ENCODE measurements at regions of chr5 and their contacts with region 1.

Region 1: DNA sequence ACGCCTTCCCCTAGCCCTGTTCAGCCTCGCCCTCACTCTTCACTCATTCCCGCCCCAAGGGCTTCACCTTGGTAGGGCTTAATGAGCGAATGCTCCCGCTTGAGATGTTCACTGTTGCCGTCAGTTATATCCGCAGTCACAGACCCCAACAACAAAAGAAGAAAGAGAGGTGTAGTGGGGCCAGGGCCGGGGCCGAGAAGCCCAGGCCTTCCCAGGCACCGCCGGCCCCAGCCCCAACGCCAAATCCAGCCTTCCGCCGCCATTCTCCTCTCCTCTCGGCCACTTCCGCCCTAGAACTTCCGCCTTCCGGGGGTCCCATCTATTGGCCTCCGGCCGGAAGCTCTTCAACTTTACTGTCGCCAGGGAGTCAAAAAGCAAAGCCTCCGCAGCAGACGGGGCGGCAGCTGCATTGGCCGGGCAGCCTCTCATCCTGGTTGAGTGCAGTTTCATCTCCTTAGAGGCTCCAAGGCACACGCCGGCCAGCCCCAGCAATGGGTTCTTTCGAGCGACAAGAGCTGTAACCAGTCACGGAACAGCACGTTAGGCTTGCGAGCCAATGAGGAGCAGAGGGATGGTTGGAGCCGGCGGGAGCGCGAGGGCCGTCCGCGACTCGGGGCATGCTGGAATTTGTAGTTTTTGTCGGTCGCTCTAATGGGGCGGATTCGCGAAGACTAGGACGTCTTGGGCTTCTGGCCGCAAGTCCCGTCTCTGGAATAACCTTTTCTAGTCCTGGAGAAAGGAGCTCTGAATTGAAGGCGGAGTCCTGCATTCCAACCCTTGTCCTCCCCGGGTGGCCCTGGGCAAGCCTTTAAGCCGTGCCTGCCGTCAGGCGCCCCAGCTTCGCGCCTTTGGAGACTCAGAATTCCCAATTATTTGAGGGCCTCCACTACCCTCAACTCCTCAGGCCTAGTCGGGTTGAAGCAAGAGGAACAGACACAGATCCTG is at the start of gene LMAN2:
- DNase-seq: peak; percentile 83
- ATAC-seq: peak; percentile 98
- H3K4me3 Mint-ChIP-seq: peak within 1 kb of the TSS; percentile 98
- H3K27ac Mint-ChIP-seq: peak within 1 kb of the TSS; percentile 100
- H3K4me1 Mint-ChIP-seq: peaks cover 59% of the 10 kb centered on the region
- H3K27me3 Mint-ChIP-seq: no peaks in the 10 kb centered on the region
- CTCF ChIP-seq: no peak
- total RNA-seq, gene LMAN2: 88.0 and 89.7 TPM in 2 replicates

Region 2: GRCh38 chr5:177271113-177271512 is 80.5 kb before region 1 on chr5:
- CTCF ChIA-PET with region 1: no interaction called
- POLR2A ChIA-PET with region 1: no interaction called
- intact Hi-C with region 1: no loop called
- DNase-seq: no peak
- ATAC-seq: no peak
- H3K4me3 Mint-ChIP-seq: no peak overlapping the region
- H3K27ac Mint-ChIP-seq: no peak overlapping the region
- H3K4me1 Mint-ChIP-seq: no peaks in the 10 kb centered on the region
- H3K27me3 Mint-ChIP-seq: no peaks in the 10 kb centered on the region
- CTCF ChIP-seq: no peak

Region 3: DNA sequence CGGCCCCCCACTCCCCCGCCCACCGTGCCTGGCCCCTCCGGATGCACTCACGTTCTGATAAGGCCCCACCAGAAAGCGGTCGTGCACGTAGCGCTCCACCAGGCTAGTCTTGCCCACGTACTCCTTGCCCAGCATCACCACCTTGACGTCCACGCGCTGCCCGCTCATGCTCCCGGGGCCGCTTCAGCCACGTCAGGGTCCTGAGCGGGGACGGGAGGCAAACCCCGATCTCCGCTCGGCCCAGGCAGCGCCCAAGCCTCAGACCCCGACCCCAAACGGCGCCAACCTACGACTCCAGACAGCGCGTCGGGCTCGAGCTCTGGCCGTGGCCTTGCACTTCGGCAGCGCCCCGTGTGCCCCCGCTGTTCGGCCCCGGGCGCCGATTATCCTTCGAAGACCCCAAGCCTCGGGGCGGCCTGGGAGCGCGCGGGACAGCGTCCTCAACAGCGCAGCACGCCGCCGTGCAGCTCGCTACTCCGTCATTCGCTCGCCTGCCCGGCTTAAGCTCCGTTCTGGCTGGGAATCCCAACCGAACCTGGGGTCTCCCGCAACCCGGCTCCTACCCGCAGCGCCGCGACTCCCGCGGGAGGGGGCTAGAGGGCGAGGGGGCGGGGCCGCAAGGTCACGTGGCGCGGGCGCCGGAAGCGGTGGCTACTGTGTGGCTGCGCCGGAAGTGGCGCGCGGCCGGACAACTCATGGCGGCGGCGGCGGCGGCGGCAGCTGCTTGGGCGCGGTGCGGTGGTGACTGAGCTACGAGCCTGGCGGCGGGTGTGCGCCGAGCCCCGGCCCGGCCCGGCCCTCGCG is 48.3 kb before region 1 on chr5 and contains the starts of genes PRELID1 and RAB24:
- CTCF ChIA-PET with region 1: interaction called, 4 read pairs
- POLR2A ChIA-PET with region 1: interaction called, 21 read pairs
- intact Hi-C with region 1: loop called (anchors 2 kb)
- DNase-seq: peak; percentile 93
- ATAC-seq: peak; percentile 41
- H3K4me3 Mint-ChIP-seq: peak within 1 kb of the TSS; percentile 90
- H3K27ac Mint-ChIP-seq: peak within 1 kb of the TSS; percentile 89
- H3K4me1 Mint-ChIP-seq: peaks cover 75% of the 10 kb centered on the region
- H3K27me3 Mint-ChIP-seq: no peaks in the 10 kb centered on the region
- CTCF ChIP-seq: no peak
- total RNA-seq, gene PRELID1: 141 and 160 TPM in 2 replicates
- total RNA-seq, gene RAB24: 35.6 and 36.3 TPM in 2 replicates

Region 4: DNA sequence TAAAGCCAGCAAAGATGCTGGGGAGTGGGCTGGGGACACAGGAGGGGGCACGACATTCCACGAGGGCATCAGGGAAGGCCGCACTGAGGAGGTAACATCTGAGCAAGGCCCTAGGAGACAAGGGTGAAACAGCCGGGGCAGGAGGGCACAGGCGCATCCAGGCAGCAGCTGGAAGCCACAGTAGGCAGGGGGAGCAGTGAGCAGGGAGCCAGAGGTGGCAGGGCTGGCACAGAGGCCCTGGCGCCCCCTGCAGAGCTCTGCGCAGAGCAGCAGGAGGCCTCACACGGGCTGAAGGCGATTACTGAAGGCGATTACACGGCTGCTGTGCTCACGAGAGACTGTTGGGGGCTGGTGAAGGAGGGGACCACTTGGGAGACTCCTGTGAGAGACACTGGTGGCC is 15.5 kb before region 1 on chr5:
- CTCF ChIA-PET with region 1: interaction called, 4 read pairs
- POLR2A ChIA-PET with region 1: interaction called, 15 read pairs
- intact Hi-C with region 1: no loop called
- DNase-seq: no peak
- ATAC-seq: peak; percentile 62
- H3K4me3 Mint-ChIP-seq: no peak overlapping the region
- H3K27ac Mint-ChIP-seq: no peak overlapping the region
- H3K4me1 Mint-ChIP-seq: peaks cover 16% of the 10 kb centered on the region
- H3K27me3 Mint-ChIP-seq: no peaks in the 10 kb centered on the region
- CTCF ChIP-seq: no peak

Region 5: GRCh38 chr5:177370488-177371119 is 18.9 kb after region 1 on chr5:
- CTCF ChIA-PET with region 1: interaction called, 17 read pairs
- POLR2A ChIA-PET with region 1: interaction called, 12 read pairs
- intact Hi-C with region 1: loop called (anchors 2 kb)
- DNase-seq: peak; percentile 48
- ATAC-seq: peak; percentile 85
- H3K4me3 Mint-ChIP-seq: peak overlapping the region; percentile 60
- H3K27ac Mint-ChIP-seq: no peak overlapping the region
- H3K4me1 Mint-ChIP-seq: peaks cover 53% of the 10 kb centered on the region
- H3K27me3 Mint-ChIP-seq: no peaks in the 10 kb centered on the region
- CTCF ChIP-seq: no peak

Region 6: GRCh38 chr5:177599731-177600507 is 248.3 kb after region 1 on chr5 and contains the start of gene B4GALT7:
- CTCF ChIA-PET with region 1: no interaction called
- POLR2A ChIA-PET with region 1: interaction called, 16 read pairs
- intact Hi-C with region 1: loop called (anchors 2 kb)
- DNase-seq: peak; percentile 75
- ATAC-seq: peak; percentile 89
- H3K4me3 Mint-ChIP-seq: peak within 1 kb of the TSS; percentile 91
- H3K27ac Mint-ChIP-seq: peak within 1 kb of the TSS; percentile 93
- H3K4me1 Mint-ChIP-seq: peaks cover 28% of the 10 kb centered on the region
- H3K27me3 Mint-ChIP-seq: no peaks in the 10 kb centered on the region
- CTCF ChIP-seq: no peak
- total RNA-seq, gene B4GALT7: 36.3 and 42.3 TPM in 2 replicates